Activated CD4-positive, alpha-beta memory T cell treated with anti-CD3 and anti-CD28 coated beads for 36 hours (primary cell): ENCODE measurements at regions of chr4 and their contacts with region 1.

Region 1: GRCh38 chr4:69689599-69689998 is 36.6 kb upstream of the UGT2A1 start:
- DNase-seq: no peak
- H3K4me3 Mint-ChIP-seq: no peak overlapping the region
- H3K27ac Mint-ChIP-seq: no peak overlapping the region
- H3K4me1 Mint-ChIP-seq: peaks cover 2% of the 10 kb centered on the region
- H3K27me3 Mint-ChIP-seq: no peaks in the 10 kb centered on the region

Region 2: GRCh38 chr4:69649629-69650028 is 40.0 kb before region 1 on chr4:
- CTCF ChIA-PET with region 1: no interaction called
- POLR2A ChIA-PET with region 1: no interaction called
- intact Hi-C with region 1: no loop called
- DNase-seq: no peak
- H3K4me3 Mint-ChIP-seq: no peak overlapping the region
- H3K27ac Mint-ChIP-seq: no peak overlapping the region
- H3K4me1 Mint-ChIP-seq: no peaks in the 10 kb centered on the region
- H3K27me3 Mint-ChIP-seq: no peaks in the 10 kb centered on the region

Region 3: DNA sequence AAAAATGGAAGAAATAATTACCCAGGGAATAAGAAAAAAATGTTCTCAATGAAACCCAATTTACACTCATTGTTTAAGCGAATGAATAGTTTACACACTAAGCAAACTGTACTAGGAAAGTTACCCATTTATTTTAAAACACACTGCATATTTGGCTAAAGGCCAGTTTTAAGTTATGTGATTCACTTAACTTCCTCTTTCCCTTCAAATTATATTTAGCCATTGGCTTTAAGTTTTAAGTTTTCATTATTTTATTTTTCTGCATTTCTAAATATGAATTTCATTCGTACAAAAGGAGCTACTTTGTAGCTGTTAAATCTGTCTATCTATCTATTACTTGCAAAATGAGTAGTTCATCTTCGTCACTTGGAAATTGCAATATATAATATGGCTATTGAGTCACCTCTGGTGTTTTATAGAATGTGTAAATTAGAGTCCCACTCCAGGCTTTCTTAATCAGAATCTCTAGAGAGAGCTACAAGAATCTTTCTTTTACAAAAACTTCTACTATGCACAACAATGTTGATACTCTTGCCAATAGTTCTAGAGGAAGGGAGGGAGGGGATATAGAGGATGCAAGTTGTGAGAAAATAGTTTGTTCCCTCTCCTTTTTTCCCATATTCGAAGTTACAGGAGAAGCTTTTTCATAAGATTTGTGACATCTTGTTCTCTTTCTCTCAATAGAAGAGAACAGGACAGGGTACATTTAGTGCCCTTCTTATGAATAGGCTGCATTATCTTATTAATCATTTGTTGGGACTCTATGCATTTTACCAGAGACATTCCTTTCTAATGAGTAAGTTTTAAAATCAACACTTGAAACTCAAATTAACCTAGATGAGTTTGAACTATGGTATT is 29.0 kb after region 1 on chr4:
- CTCF ChIA-PET with region 1: no interaction called
- POLR2A ChIA-PET with region 1: no interaction called
- intact Hi-C with region 1: no loop called
- DNase-seq: no peak
- H3K4me3 Mint-ChIP-seq: no peak overlapping the region
- H3K27ac Mint-ChIP-seq: no peak overlapping the region
- H3K4me1 Mint-ChIP-seq: no peaks in the 10 kb centered on the region
- H3K27me3 Mint-ChIP-seq: no peaks in the 10 kb centered on the region

Region 4: GRCh38 chr4:69823481-69824186 is 134.0 kb after region 1 on chr4:
- CTCF ChIA-PET with region 1: interaction called, 6 read pairs
- POLR2A ChIA-PET with region 1: no interaction called
- intact Hi-C with region 1: loop called (anchors 1 kb)
- DNase-seq: peak; percentile 55
- H3K4me3 Mint-ChIP-seq: no peak overlapping the region
- H3K27ac Mint-ChIP-seq: no peak overlapping the region
- H3K4me1 Mint-ChIP-seq: peaks cover 2% of the 10 kb centered on the region
- H3K27me3 Mint-ChIP-seq: no peaks in the 10 kb centered on the region

Region 5: GRCh38 chr4:69881173-69881773 is 191.7 kb after region 1 on chr4:
- CTCF ChIA-PET with region 1: interaction called, 11 read pairs
- POLR2A ChIA-PET with region 1: no interaction called
- intact Hi-C with region 1: loop called (anchors 1 kb)
- DNase-seq: peak; percentile 18
- H3K4me3 Mint-ChIP-seq: no peak overlapping the region
- H3K27ac Mint-ChIP-seq: no peak overlapping the region
- H3K4me1 Mint-ChIP-seq: no peaks in the 10 kb centered on the region
- H3K27me3 Mint-ChIP-seq: no peaks in the 10 kb centered on the region

Region 6: DNA sequence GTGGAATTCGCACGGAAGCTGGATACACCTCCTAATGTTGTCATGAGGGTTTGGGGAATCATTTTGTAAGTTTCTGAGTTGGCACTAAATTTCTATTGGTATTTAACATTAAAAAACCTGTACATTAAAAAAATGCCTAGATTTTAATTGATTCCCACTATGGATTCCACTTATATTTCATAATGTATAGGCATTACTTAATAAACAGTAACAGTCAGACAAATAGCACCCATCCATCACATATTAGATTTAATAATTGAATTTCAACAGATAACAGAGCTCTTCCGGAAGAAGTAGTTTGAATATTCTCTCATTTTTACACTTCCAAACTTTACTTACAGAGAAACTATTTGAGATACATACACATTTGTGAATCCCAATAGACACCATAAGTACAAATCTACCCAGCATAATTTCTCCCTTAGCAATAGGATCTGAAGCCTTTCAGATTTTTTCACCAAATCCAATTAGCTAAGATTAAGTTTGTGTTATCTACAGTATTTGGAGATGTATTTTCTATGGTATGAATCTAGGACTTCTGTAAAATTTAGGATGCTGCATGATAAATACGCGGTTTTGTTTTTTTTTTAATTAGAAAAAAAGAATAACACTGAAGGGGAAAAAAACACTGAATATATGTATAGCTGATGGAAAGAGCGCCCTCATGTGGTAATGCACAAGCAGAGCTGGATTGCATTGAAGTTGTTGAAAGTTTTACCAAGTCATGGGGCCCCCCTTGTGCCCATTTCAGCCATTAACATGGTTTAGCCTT is 493.8 kb after region 1 on chr4:
- CTCF ChIA-PET with region 1: interaction called, 5 read pairs
- POLR2A ChIA-PET with region 1: no interaction called
- intact Hi-C with region 1: loop called (anchors 1 kb)
- DNase-seq: peak; percentile 12
- H3K4me3 Mint-ChIP-seq: no peak overlapping the region
- H3K27ac Mint-ChIP-seq: no peak overlapping the region
- H3K4me1 Mint-ChIP-seq: no peaks in the 10 kb centered on the region
- H3K27me3 Mint-ChIP-seq: no peaks in the 10 kb centered on the region

Region 7: GRCh38 chr4:70505151-70505748 is 815.7 kb after region 1 on chr4:
- CTCF ChIA-PET with region 1: interaction called, 6 read pairs
- POLR2A ChIA-PET with region 1: no interaction called
- intact Hi-C with region 1: loop called (anchors 1 kb)
- DNase-seq: peak; percentile 58
- H3K4me3 Mint-ChIP-seq: no peak overlapping the region
- H3K27ac Mint-ChIP-seq: no peak overlapping the region
- H3K4me1 Mint-ChIP-seq: no peaks in the 10 kb centered on the region
- H3K27me3 Mint-ChIP-seq: no peaks in the 10 kb centered on the region

Region 8: GRCh38 chr4:70559211-70559830 is 869.7 kb after region 1 on chr4:
- CTCF ChIA-PET with region 1: interaction called, 4 read pairs
- POLR2A ChIA-PET with region 1: no interaction called
- intact Hi-C with region 1: loop called (anchors 2 kb)
- DNase-seq: peak; percentile 55
- H3K4me3 Mint-ChIP-seq: no peak overlapping the region
- H3K27ac Mint-ChIP-seq: no peak overlapping the region
- H3K4me1 Mint-ChIP-seq: peaks cover 4% of the 10 kb centered on the region
- H3K27me3 Mint-ChIP-seq: no peaks in the 10 kb centered on the region